AG04449 (cell line): ENCODE measurements at regions of chr11 and their contacts with region 1.

Region 1: DNA sequence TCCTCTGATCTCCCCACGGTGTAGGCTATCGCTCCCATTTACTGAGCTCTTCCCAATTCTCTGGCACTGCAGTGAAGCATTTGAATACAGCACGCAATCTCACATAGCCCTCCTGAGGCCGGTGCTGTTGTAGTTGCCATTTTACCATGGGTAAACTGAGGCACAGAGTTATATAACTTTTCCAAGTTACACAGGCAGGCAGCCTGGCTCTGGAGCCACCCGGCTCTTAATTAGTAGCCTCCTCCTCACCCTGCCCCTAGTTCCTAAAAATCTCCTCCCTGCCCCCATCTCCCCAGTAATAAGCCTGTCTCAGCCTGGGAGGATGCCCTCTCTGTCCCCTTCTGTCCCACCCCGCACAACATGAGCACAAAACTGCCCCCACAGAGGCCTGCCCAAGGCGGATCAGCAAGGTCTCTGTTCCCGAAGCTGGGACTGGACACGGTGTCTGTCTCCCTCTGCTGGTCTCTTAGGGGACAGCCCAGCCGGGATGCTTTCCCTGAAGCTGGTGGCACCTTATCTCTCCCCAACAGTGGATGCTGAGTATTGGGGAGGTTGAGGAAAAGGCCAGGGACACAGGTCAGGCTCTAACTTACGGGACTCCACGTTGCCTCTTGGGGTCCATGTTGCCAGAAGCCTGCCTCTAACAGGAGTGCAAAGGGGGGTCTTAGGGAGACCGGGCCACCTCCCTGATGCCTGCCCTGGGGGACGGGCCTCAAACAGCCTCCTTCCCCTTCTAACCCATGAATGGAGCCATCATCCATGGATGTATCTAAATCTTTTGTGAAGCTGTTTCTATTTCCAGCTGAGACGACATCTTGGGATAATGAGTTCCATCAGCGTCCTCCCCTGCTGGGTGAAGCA is 9.1 kb upstream of the CLCF1 start:
- DNase-seq: no peak
- H3K4me3 ChIP-seq: no peak overlapping the region
- CTCF ChIP-seq: peak; percentile 94

Region 2: DNA sequence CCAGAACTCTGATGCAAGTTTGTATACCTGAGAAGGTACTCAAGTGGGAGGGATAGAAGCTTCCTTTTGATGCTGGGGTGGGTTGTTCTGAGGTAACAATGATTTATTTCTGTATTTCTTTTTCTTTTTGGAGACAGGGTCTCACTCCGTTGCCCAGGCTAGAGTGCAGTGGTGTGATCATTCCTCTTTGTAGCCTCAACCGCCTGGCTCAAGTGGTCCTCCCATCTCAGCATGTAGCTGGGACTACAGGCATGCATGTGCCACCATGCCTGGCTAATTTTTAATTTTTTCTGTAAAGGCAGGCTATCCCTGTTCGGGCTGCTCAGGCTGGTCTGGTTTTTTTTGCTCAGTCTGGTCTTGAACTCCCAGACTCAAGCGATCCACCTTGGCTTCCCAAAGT is 255.5 kb before region 1 on chr11:
- CTCF ChIA-PET with region 1: no interaction called
- POLR2A ChIA-PET with region 1: no interaction called
- DNase-seq: no peak
- H3K4me3 ChIP-seq: no peak overlapping the region
- CTCF ChIP-seq: no peak

Region 3: GRCh38 chr11:67239783-67240575 is 142.5 kb before region 1 on chr11:
- CTCF ChIA-PET with region 1: interaction called, 11 read pairs
- POLR2A ChIA-PET with region 1: no interaction called
- DNase-seq: peak; percentile 92
- H3K4me3 ChIP-seq: peak overlapping the region; percentile 78
- CTCF ChIP-seq: peak; percentile 14

Region 4: DNA sequence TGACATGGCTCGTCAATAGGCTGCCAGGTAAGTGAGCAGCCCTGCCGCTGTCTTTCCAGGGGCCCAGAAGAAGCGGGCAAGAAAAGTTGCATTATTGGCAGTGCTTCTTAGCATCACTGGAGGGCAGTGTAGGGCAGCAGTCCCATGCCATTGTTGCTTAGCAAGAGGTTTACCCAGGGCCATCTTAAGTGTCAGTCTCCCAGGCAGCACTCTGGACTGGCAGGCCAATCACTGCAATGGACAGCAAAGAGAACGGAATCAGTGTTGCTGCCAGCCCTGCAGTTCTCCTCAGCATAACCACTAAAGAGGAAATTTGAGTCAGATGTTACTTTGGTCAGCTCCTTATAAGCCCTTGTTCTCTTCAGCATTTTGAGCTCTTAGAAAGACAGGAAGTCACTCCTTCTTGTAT is 129.7 kb before region 1 on chr11:
- CTCF ChIA-PET with region 1: interaction called, 10 read pairs
- POLR2A ChIA-PET with region 1: no interaction called
- DNase-seq: no peak
- H3K4me3 ChIP-seq: no peak overlapping the region
- CTCF ChIP-seq: peak; percentile 36

Region 5: GRCh38 chr11:67353317-67354074 is 29.0 kb before region 1 on chr11 and contains the start of gene POLD4:
- CTCF ChIA-PET with region 1: interaction called, 2,108 read pairs
- POLR2A ChIA-PET with region 1: interaction called, 17 read pairs
- DNase-seq: peak; percentile 77
- H3K4me3 ChIP-seq: peak within 1 kb of the TSS; percentile 92
- CTCF ChIP-seq: no peak